ENCODE measurements at regions of chr22 and their contacts with region 1.

Region 1: GRCh38 chr22:33105501-33105911 is 47.3 kb upstream of the SYN3 start:
- DNase-seq: peak in 8 of 10 donors; percentile 45 to 93 (median 57)

Region 2: DNA sequence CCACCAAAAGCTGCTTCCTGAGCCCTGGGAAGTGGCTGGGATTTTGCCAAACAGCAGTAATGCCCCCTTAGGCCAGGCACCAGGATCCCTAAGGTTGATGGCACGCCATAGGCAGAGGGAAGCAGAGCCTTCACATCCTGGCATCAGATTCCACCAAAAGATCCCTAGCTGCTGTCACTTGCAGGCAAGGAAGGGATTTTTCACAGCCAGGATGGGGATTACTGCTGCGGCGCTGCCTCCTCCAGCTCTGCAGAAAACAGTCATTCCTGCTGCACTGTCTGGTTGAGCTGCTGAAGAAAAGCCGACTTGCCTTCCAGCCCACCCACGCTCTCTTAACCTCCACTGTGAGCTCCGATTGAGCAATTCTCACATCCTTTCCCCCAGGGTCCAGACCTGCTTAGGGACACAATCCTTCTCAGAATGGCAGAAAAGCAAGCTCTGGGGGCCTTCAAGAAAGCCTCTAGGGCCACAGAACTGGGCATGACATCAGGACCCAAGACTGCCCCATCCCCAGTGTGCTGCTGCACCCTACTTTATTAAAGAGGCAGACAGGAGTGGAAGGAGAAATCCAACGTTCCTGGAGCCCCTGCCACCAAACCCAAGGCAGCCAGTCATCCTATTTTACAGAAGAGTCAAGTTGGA is 67.3 kb before region 1 on chr22:
- intact Hi-C with region 1: loop called (anchors 10 kb)
- DNase-seq: peak in 8 of 10 donors; percentile 41 to 94 (median 49)

Region 3: GRCh38 chr22:33361581-33361980 is 256.1 kb after region 1 on chr22:
- intact Hi-C with region 1: no loop called
- DNase-seq: no peak

Measured in posterior cingulate gyrus (tissue), 11 donors.